Activated naive CD4-positive, alpha-beta T cell treated with anti-CD3 and anti-CD28 coated beads for 36 hours (primary cell): ENCODE measurements at regions of chr5 and their contacts with region 1.

Region 1: GRCh38 chr5:40679155-40679913 is 381 bp upstream of the PTGER4 start:
- DNase-seq: peak; percentile 95
- H3K4me3 Mint-ChIP-seq: peak overlapping the region; percentile 89
- H3K27ac Mint-ChIP-seq: peak overlapping the region; percentile 99
- H3K4me1 Mint-ChIP-seq: peaks cover 41% of the 10 kb centered on the region
- H3K27me3 Mint-ChIP-seq: no peaks in the 10 kb centered on the region

Region 2: GRCh38 chr5:39074016-39074886 is 1605.1 kb before region 1 on chr5 and contains the start of gene RICTOR:
- CTCF ChIA-PET with region 1: no interaction called
- intact Hi-C with region 1: loop called (anchors 5 kb)
- DNase-seq: peak; percentile 92
- H3K4me3 Mint-ChIP-seq: peak within 1 kb of the TSS; percentile 95
- H3K27ac Mint-ChIP-seq: peak within 1 kb of the TSS; percentile 92
- H3K4me1 Mint-ChIP-seq: peaks cover 31% of the 10 kb centered on the region
- H3K27me3 Mint-ChIP-seq: peaks cover 23% of the 10 kb centered on the region
- total RNA-seq, gene RICTOR: 25.0 to 26.1 TPM

Region 3: DNA sequence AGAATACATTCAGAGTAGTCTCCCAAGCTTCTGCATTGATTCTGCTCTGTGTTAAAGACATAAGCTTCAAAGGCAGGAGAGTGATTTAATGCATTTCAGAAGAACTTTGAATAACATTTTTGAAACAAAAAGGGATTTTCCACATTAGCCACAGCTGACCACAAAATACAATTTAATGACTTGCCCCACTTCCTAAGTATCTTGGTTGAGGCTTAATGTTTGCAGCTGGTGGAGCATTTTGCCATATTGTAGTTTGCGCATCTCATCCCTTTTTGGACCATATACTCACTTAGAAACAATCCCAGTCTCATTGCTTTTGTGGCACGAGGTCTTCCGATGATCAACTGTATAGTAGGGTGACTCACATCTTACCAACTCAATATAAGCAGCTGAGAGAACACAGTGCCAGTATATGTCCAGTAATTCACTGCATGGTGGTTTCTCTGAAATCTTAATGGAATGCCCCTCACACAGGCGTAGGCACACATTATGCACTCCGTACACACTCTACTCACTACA is 455.4 kb before region 1 on chr5:
- CTCF ChIA-PET with region 1: no interaction called
- intact Hi-C with region 1: loop called (anchors 1 kb)
- DNase-seq: peak; percentile 66
- H3K4me3 Mint-ChIP-seq: peak overlapping the region; percentile 31
- H3K27ac Mint-ChIP-seq: peak overlapping the region; percentile 92
- H3K4me1 Mint-ChIP-seq: peaks cover 50% of the 10 kb centered on the region
- H3K27me3 Mint-ChIP-seq: no peaks in the 10 kb centered on the region

Region 4: GRCh38 chr5:40404613-40405012 is 274.7 kb before region 1 on chr5:
- CTCF ChIA-PET with region 1: interaction called, 3 read pairs
- intact Hi-C with region 1: loop called (anchors 1 kb)
- DNase-seq: no peak
- H3K4me3 Mint-ChIP-seq: peak overlapping the region; percentile 33
- H3K27ac Mint-ChIP-seq: peak overlapping the region; percentile 99
- H3K4me1 Mint-ChIP-seq: peaks cover 89% of the 10 kb centered on the region
- H3K27me3 Mint-ChIP-seq: no peaks in the 10 kb centered on the region

Region 5: GRCh38 chr5:40437452-40437861 is 241.9 kb before region 1 on chr5:
- CTCF ChIA-PET with region 1: no interaction called
- intact Hi-C with region 1: loop called (anchors 1 kb)
- DNase-seq: peak; percentile 19
- H3K4me3 Mint-ChIP-seq: no peak overlapping the region
- H3K27ac Mint-ChIP-seq: peak overlapping the region; percentile 94
- H3K4me1 Mint-ChIP-seq: peaks cover 81% of the 10 kb centered on the region
- H3K27me3 Mint-ChIP-seq: no peaks in the 10 kb centered on the region

Region 6: GRCh38 chr5:40551496-40552491 is 127.5 kb before region 1 on chr5:
- CTCF ChIA-PET with region 1: no interaction called
- intact Hi-C with region 1: no loop called
- DNase-seq: no peak
- H3K4me3 Mint-ChIP-seq: no peak overlapping the region
- H3K27ac Mint-ChIP-seq: no peak overlapping the region
- H3K4me1 Mint-ChIP-seq: peaks cover 17% of the 10 kb centered on the region
- H3K27me3 Mint-ChIP-seq: no peaks in the 10 kb centered on the region

Region 7: GRCh38 chr5:40615586-40616170 is 63.7 kb before region 1 on chr5:
- CTCF ChIA-PET with region 1: no interaction called
- intact Hi-C with region 1: no loop called
- DNase-seq: no peak
- H3K4me3 Mint-ChIP-seq: no peak overlapping the region
- H3K27ac Mint-ChIP-seq: peak overlapping the region; percentile 1
- H3K4me1 Mint-ChIP-seq: peaks cover 15% of the 10 kb centered on the region
- H3K27me3 Mint-ChIP-seq: no peaks in the 10 kb centered on the region

Region 8: GRCh38 chr5:40627706-40628105 is 51.6 kb before region 1 on chr5:
- CTCF ChIA-PET with region 1: no interaction called
- intact Hi-C with region 1: no loop called
- DNase-seq: no peak
- H3K4me3 Mint-ChIP-seq: no peak overlapping the region
- H3K27ac Mint-ChIP-seq: no peak overlapping the region
- H3K4me1 Mint-ChIP-seq: peaks cover 40% of the 10 kb centered on the region
- H3K27me3 Mint-ChIP-seq: no peaks in the 10 kb centered on the region

Region 9: DNA sequence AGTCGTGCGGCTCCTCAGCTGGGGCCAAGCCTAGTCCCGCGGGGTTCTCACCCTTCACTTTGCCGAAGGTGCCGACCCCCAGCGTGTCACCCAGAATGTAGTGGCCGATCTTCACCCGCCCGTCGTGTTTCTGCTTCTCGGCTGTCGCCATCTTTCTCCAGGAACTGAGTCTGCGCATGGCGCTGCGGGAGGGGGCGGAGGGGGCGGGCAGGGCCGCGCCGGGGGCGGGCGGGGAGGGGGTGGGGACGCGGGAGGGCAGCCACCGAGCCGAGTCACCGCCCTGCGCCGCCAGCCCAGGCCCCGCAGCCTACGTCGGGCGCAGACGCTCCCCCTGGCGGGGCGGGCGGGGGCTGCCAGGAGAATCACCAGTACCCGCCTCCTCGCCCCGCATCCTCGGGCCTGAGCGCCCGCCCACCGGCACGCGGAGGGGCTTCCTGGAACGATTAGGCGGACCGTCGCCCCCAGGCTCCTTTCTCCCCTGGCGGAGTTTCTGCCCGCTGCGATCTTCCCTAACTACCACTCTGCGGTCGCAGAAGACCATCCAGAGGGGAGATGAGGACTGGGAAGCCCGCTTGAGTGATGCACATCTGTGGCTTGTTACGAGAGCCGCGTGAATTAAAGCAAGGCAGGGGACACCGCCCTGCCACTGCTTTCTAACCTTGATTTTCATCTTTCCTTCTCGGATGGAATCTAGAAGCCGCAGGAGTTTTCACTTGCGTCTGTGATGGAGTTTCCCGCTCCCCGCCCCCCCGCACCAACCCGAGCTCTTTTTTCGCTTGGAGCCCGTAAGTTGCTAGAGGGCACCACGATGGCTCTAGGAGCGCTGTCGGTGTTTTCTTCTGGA is 118.9 kb after region 1 on chr5 and contains the start of gene PRKAA1:
- CTCF ChIA-PET with region 1: no interaction called
- intact Hi-C with region 1: loop called (anchors 2 kb)
- DNase-seq: peak; percentile 85
- H3K4me3 Mint-ChIP-seq: peak within 1 kb of the TSS; percentile 88
- H3K27ac Mint-ChIP-seq: peak within 1 kb of the TSS; percentile 85
- H3K4me1 Mint-ChIP-seq: peaks cover 41% of the 10 kb centered on the region
- H3K27me3 Mint-ChIP-seq: peaks cover 2% of the 10 kb centered on the region
- total RNA-seq, gene PRKAA1: 52.6 to 58.6 TPM